Activated CD4-positive, alpha-beta T cell treated with anti-CD3 and anti-CD28 coated beads for 36 hours (primary cell): ENCODE measurements at regions of chr19 and their contacts with region 1.

Region 1: DNA sequence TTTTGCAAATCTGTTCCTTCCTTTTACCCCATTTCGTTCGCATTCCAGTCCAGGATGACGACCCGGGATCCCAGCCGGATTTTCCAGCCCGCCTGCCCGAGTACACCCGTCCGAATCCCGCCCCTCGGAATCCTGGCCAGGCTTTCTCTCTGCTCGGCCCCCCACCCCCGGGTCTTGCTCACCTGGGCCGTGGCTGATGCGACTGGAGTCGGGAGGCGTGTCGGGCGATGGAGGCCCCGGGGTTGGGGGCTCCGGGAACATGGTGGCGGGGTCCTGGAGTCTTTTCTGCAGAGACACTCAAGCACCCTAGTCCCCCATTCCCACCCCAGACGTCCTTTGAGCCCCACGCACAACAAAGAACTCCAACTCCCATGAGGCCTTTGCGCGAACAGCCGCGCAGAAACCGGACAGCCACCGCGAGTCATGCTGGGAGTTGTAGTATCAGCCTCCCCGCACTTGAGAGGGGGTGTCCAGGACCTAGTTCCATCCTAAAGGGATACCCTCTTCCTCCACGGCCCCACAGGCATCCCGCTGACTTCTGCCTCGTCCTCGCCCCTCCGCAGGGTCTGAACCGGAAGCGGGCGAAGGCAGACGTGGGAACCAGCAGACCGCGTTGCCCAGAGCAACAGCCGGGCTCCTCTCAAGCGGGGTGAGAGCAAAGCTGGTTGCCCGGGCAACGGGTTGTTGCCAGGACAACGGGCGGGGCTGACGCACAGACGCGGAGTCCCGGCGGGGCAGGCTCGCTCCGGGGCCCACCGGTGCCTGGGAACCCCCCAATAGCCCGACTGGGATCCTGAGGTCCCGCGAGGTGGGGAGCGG is 1.1 kb downstream of the SYT5 start:
- DNase-seq: peak; percentile 95
- ATAC-seq: peak; percentile 81
- H3K4me3 Mint-ChIP-seq: peak overlapping the region; percentile 61
- H3K27ac Mint-ChIP-seq: no peak overlapping the region
- H3K4me1 Mint-ChIP-seq: peaks cover 20% of the 10 kb centered on the region
- H3K27me3 Mint-ChIP-seq: peaks cover 49% of the 10 kb centered on the region

Region 2: GRCh38 chr19:55166530-55167268 is 12.3 kb before region 1 on chr19 and contains the start of gene DNAAF3:
- CTCF ChIA-PET with region 1: interaction called, 7 read pairs
- POLR2A ChIA-PET with region 1: interaction called, 3 read pairs
- intact Hi-C with region 1: loop called (anchors 1 kb)
- DNase-seq: peak; percentile 95
- ATAC-seq: peak; percentile 95
- H3K4me3 Mint-ChIP-seq: peak within 1 kb of the TSS; percentile 71
- H3K27ac Mint-ChIP-seq: peak within 1 kb of the TSS; percentile 11
- H3K4me1 Mint-ChIP-seq: peaks cover 10% of the 10 kb centered on the region
- H3K27me3 Mint-ChIP-seq: peaks cover 45% of the 10 kb centered on the region
- total RNA-seq, gene DNAAF3: 0.53 to 0.72 TPM

Region 3: GRCh38 chr19:55216461-55217198 is 37.6 kb after region 1 on chr19:
- CTCF ChIA-PET with region 1: interaction called, 3 read pairs
- POLR2A ChIA-PET with region 1: no interaction called
- intact Hi-C with region 1: loop called (anchors 2 to 5 kb)
- DNase-seq: peak; percentile 84
- ATAC-seq: peak; percentile 90
- H3K4me3 Mint-ChIP-seq: peak overlapping the region; percentile 43
- H3K27ac Mint-ChIP-seq: no peak overlapping the region
- H3K4me1 Mint-ChIP-seq: peaks cover 15% of the 10 kb centered on the region
- H3K27me3 Mint-ChIP-seq: peaks cover 20% of the 10 kb centered on the region

Region 4: GRCh38 chr19:55437410-55438075 is 258.6 kb after region 1 on chr19:
- CTCF ChIA-PET with region 1: no interaction called
- POLR2A ChIA-PET with region 1: interaction called, 3 read pairs
- intact Hi-C with region 1: loop called in 1 of 2 experiments (anchors 1 kb)
- DNase-seq: peak; percentile 58
- ATAC-seq: no peak
- H3K4me3 Mint-ChIP-seq: no peak overlapping the region
- H3K27ac Mint-ChIP-seq: no peak overlapping the region
- H3K4me1 Mint-ChIP-seq: peaks cover 13% of the 10 kb centered on the region
- H3K27me3 Mint-ChIP-seq: peaks cover 42% of the 10 kb centered on the region

Region 5: GRCh38 chr19:56026769-56027168 is 847.8 kb after region 1 on chr19:
- CTCF ChIA-PET with region 1: no interaction called
- POLR2A ChIA-PET with region 1: no interaction called
- intact Hi-C with region 1: no loop called
- DNase-seq: no peak
- ATAC-seq: no peak
- H3K4me3 Mint-ChIP-seq: no peak overlapping the region
- H3K27ac Mint-ChIP-seq: no peak overlapping the region
- H3K4me1 Mint-ChIP-seq: no peaks in the 10 kb centered on the region
- H3K27me3 Mint-ChIP-seq: no peaks in the 10 kb centered on the region